Ovary (tissue), 10 donors: ENCODE measurements at regions of chr2 and their contacts with region 1.

Region 1: DNA sequence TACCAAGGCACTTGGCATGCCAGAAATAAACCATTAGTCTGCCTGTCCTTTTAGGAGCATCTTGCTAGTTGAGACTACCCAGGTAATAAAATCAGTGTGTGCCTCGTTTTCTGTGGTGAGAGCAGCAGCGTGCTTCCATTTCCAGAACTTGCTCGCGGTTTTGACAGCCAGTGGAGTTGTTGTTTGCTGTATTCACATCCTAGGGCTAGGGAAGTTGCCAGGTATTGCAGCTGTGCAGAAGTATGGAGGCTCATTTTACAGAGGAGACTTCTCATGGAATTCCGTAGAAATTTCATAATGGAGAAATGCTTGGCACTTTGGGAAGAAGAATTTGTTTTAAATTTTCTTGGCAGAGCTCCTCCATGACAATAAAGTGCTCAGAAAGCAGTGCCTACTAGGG is 1355.1 kb upstream of the ZEB2 start:
- DNase-seq: no peak
- H3K4me3 ChIP-seq: no peak overlapping the region
- H3K27ac ChIP-seq: no peak overlapping the region
- H3K4me1 ChIP-seq: peaks cover 2% of the 10 kb centered on the region
- H3K27me3 ChIP-seq: no peaks in the 10 kb centered on the region
- CTCF ChIP-seq: no peak
- EP300 ChIP-seq: no peak
- POLR2A ChIP-seq: no peak

Region 2: GRCh38 chr2:144950899-144951560 is 924.0 kb before region 1 on chr2:
- intact Hi-C with region 1: no loop called
- DNase-seq: no peak
- H3K4me3 ChIP-seq: no peak overlapping the region
- H3K27ac ChIP-seq: no peak overlapping the region
- H3K4me1 ChIP-seq: no peaks in the 10 kb centered on the region
- H3K27me3 ChIP-seq: no peaks in the 10 kb centered on the region
- CTCF ChIP-seq: no peak
- EP300 ChIP-seq: no peak
- POLR2A ChIP-seq: no peak

Region 3: GRCh38 chr2:145141981-145142380 is 733.0 kb before region 1 on chr2:
- intact Hi-C with region 1: loop called in 1 of 4 experiments (anchors 5 kb)
- DNase-seq: no peak
- H3K4me3 ChIP-seq: no peak overlapping the region
- H3K27ac ChIP-seq: no peak overlapping the region
- H3K4me1 ChIP-seq: no peaks in the 10 kb centered on the region
- H3K27me3 ChIP-seq: no peaks in the 10 kb centered on the region
- CTCF ChIP-seq: no peak
- EP300 ChIP-seq: no peak
- POLR2A ChIP-seq: no peak

Region 4: GRCh38 chr2:145253492-145253891 is 621.5 kb before region 1 on chr2:
- intact Hi-C with region 1: no loop called
- DNase-seq: no peak
- H3K4me3 ChIP-seq: no peak overlapping the region
- H3K27ac ChIP-seq: no peak overlapping the region
- H3K4me1 ChIP-seq: no peaks in the 10 kb centered on the region
- H3K27me3 ChIP-seq: no peaks in the 10 kb centered on the region
- CTCF ChIP-seq: no peak
- EP300 ChIP-seq: no peak
- POLR2A ChIP-seq: no peak

Region 5: DNA sequence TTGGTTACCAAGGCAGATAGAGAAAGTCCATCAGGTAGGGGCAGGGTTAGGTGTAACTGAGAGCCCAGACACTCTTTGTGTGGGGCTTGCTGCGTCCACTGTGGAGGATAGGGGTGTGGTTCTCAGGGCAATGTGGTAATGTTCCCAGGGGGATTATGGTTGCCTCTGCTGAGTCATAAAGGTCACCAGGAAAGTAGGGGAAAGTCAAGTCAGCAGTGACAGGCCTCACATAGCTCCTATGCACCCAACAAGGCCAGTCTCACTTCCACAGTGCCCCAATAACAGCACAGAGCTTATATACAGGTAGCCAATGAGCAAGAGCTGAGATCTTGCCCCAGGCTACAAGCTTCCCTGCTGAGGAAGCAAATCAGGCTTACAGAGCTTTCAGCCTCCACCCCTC is 82.9 kb after region 1 on chr2:
- intact Hi-C with region 1: no loop called
- DNase-seq: no peak
- H3K4me3 ChIP-seq: no peak overlapping the region
- H3K27ac ChIP-seq: no peak overlapping the region
- H3K4me1 ChIP-seq: no peaks in the 10 kb centered on the region
- H3K27me3 ChIP-seq: no peaks in the 10 kb centered on the region
- CTCF ChIP-seq: no peak
- EP300 ChIP-seq: no peak
- POLR2A ChIP-seq: no peak